ENCODE measurements at regions of chr1 and their contacts with region 1.

Region 1: DNA sequence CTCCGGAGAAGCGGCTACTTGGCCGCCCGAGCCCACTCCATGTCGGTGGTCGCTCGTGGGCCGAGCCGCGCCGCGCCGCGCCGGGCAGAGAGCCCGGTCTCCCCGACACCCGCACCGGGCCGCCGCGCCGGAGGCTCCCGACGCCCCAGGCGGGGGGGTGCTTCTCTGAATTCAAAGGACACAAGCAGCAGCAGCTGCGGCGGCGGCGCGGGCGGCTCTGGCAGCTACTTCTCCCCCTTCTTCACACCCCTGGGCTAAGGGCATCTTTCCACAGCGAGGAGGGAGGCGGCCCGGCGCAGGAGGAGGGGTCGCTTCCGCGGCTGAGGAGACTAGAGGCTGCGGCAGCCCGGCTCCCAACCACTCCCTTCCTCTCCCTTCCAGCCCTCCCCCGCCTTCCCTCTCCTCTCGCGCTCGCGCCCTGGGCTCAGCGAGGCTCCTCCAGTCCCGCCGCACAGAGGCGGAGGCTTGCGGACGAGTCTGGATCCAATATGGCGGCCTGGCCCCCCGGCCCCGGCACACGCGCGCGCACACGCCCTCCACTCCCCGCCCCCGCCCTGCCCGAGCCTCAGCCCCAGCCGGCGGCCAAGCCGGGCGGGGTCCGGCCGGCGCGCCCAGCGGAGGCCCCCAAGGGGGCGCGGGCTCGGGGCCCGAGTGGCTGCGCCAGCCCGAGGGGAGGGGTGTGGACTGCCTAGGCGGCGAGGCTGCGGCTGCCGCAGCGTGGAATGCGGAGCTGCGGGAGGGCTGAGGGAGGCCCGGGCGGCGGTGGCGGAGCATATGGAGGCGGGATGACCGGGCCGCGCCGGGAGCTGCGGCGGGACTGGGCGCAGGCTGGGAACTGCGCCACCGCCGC is at the start of gene CDC42BPA:
- DNase-seq: peak; percentile 87 to 91
- ATAC-seq: peak; percentile 90 to 95 (median 93)
- H3K4me3 ChIP-seq: peak within 1 kb of the TSS; percentile 78 to 96 (median 86)
- H3K27ac ChIP-seq: peak within 1 kb of the TSS; percentile 90 to 99 (median 98)
- H3K4me1 ChIP-seq: peaks cover 0 to 32% (median 15%) of the 10 kb centered on the region in 9 donors
- H3K27me3 ChIP-seq: peaks cover 0 to 29% (median 0%) of the 10 kb centered on the region in 7 donors
- CTCF ChIP-seq: no peak
- total RNA-seq, gene CDC42BPA: 22.2 to 39.5 (median 31.8) TPM

Region 2: DNA sequence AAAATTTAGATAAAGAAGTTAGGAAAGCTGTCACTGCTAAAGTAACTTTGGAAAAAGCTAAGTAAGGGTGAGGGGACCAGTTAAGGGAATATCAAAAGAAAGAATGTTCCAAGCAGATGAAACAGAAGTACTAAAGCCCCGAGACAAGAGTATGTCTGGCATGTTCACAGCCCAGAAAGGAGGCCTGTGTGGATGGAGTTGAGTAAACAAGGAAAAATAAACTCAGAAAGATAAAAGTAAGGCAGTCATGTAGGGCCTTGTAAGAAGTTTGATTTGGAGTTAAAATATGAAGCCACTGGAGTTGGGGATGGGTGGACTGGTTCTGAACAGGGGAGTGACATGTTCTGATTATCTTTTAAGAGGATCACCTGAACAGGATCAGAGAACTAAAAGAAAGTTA is 177.9 kb before region 1 on chr1:
- intact Hi-C with region 1: loop called in 2 of 10 experiments (anchors 5 to 10 kb)
- DNase-seq: no peak
- ATAC-seq: no peak
- H3K4me3 ChIP-seq: no peak overlapping the region
- H3K27ac ChIP-seq: no peak overlapping the region
- H3K4me1 ChIP-seq: no peaks in the 10 kb centered on the region
- H3K27me3 ChIP-seq: no peaks in the 10 kb centered on the region
- CTCF ChIP-seq: no peak

Region 3: DNA sequence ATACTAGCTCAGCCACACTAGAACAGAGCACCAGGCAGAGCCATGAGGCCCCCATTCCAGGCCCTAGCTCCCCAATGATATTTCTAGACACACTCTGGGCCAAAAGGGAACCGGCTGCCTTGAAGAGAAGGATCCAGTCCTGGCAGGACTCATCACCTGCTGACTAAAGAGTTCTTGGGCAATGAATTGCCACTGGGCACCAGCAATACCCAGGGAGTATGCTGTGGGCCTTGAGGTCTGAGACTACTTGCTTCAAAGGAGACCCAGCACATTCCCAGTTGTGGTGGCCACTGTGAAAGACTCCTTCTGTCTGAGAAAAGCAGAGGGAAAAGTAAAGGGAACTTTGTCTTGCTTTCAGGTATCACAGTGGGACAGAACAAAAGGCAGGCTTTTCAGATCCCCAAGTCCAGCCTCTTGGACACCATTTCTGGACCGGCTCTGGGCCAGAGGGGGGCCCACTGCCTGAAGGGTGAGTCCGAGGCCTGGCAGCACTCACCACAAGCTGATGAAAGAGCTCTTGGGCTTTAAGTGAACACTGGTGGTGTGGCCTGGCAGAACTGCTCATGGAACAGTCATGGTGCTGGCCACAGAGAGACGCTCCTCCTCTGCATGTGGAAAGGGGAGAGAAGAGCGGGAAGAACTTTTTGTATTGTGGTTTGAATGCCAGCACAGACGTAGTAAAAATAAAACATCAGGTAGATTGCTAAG is 72.5 kb before region 1 on chr1:
- intact Hi-C with region 1: loop called in 3 of 10 experiments (anchors 5 kb)
- DNase-seq: peak; percentile 31 to 40
- ATAC-seq: peak; percentile 59 to 95 (median 86)
- H3K4me3 ChIP-seq: no peak overlapping the region
- H3K27ac ChIP-seq: peak overlapping the region in 7 of 10 donors; percentile 6 to 54 (median 24)
- H3K4me1 ChIP-seq: peaks cover 0 to 53% (median 14%) of the 10 kb centered on the region in 9 donors
- H3K27me3 ChIP-seq: no peaks in the 10 kb centered on the region
- CTCF ChIP-seq: peak in 3 of 9 donors; percentile 21 to 40 (median 29)

Region 4: GRCh38 chr1:227357171-227357880 is 39.1 kb after region 1 on chr1:
- intact Hi-C with region 1: loop called in 2 of 10 experiments (anchors 2 to 5 kb)
- DNase-seq: peak; percentile 47 to 84
- ATAC-seq: peak; percentile 94 to 99 (median 98)
- H3K4me3 ChIP-seq: no peak overlapping the region
- H3K27ac ChIP-seq: peak overlapping the region; percentile 31 to 91 (median 74)
- H3K4me1 ChIP-seq: peaks cover 4 to 34% (median 23%) of the 10 kb centered on the region in 9 donors
- H3K27me3 ChIP-seq: no peaks in the 10 kb centered on the region
- CTCF ChIP-seq: peak in 1 of 9 donors; percentile 22